ENCODE measurements at regions of chr1 and their contacts with region 1.

Region 1: DNA sequence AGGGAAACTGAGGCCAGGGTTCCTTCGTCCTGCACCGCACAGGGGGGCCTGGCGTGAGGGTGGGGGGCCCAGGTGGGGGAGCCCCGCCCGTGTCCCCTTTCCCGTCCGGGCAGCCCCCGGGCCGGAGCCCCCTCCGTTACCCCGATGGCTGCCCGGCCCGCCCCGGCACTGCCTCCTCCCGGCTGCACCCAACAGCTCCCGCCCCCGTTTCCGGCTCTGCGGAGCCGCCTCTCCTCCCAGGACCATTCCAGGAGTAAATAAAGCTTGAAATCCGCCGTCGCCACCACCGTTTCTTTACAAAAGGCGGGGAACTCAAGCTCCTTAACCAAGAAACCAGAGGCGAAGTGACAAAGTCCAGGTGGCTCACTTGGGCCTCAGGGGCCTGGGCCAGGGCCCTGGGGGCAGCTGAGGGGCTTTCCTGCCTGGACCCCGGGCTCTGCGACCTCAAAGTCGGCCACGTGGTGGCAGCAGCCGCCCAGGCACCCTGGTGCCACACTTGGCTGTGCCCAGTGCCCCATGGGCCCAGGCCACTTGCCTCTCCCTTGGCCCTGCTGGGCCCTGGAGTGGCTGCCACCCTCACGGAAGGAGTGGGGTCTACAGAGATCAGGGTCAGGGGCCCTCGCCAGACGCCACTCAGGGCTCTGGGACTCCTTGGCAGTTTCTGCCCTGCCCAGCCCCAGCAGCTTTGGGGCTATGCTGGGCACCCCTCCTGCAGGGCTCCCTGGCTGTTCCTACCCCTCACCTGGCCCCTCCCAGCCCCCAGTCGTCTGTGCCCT is 514 bp upstream of the FAAP20 start:
- DNase-seq: peak; percentile 93
- H3K4me3 ChIP-seq: peak overlapping the region; percentile 47 to 84 (median 64)
- H3K27ac ChIP-seq: peak overlapping the region; percentile 91 to 97 (median 94)
- H3K4me1 ChIP-seq: peaks cover 41 to 69% (median 52%) of the 10 kb centered on the region in 4 donors
- H3K27me3 ChIP-seq: no peaks in the 10 kb centered on the region
- CTCF ChIP-seq: peak; percentile 86 to 98 (median 93)
- EP300 ChIP-seq: no peak
- POLR2A ChIP-seq: peak; percentile 43

Region 2: DNA sequence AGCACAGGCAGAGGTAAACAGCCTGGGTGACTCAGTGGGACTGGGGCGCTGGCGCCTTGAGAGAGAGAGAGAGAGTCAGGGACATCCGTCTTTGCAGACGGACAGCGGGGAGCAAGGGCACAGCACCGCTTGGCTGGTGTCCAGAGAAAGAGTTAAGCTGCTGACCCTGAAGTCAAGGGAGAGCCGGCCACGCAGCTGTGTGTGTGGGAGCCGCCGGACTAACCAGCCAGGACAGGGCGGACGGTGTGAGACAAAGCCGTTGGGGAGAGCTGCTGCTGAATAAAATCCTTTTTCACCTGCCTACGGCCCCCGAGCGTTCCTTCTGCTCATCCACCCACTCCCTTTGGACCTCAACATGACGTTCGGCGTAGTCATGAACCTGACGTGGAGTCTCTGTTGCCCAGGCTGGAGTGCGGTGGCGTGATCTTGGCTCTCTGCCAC is 206.0 kb before region 1 on chr1:
- in situ Hi-C with region 1: no loop called
- intact Hi-C with region 1: no loop called
- DNase-seq: no peak
- H3K4me3 ChIP-seq: no peak overlapping the region
- H3K27ac ChIP-seq: peak overlapping the region in 2 of 4 donors; percentile 47 to 51
- H3K4me1 ChIP-seq: no peaks in the 10 kb centered on the region
- H3K27me3 ChIP-seq: peaks cover 30% of the 10 kb centered on the region
- CTCF ChIP-seq: no peak
- EP300 ChIP-seq: no peak
- POLR2A ChIP-seq: no peak

Region 3: GRCh38 chr1:2381741-2382620 is 186.9 kb after region 1 on chr1:
- in situ Hi-C with region 1: loop called (anchors 5 to 10 kb)
- intact Hi-C with region 1: loop called (anchors 2 kb)
- DNase-seq: peak; percentile 82
- H3K4me3 ChIP-seq: no peak overlapping the region
- H3K27ac ChIP-seq: no peak overlapping the region
- H3K4me1 ChIP-seq: peaks cover 0 to 10% (median 2%) of the 10 kb centered on the region in 4 donors
- H3K27me3 ChIP-seq: no peaks in the 10 kb centered on the region
- CTCF ChIP-seq: peak; percentile 83 to 96 (median 92)
- EP300 ChIP-seq: no peak
- POLR2A ChIP-seq: no peak

Region 4: DNA sequence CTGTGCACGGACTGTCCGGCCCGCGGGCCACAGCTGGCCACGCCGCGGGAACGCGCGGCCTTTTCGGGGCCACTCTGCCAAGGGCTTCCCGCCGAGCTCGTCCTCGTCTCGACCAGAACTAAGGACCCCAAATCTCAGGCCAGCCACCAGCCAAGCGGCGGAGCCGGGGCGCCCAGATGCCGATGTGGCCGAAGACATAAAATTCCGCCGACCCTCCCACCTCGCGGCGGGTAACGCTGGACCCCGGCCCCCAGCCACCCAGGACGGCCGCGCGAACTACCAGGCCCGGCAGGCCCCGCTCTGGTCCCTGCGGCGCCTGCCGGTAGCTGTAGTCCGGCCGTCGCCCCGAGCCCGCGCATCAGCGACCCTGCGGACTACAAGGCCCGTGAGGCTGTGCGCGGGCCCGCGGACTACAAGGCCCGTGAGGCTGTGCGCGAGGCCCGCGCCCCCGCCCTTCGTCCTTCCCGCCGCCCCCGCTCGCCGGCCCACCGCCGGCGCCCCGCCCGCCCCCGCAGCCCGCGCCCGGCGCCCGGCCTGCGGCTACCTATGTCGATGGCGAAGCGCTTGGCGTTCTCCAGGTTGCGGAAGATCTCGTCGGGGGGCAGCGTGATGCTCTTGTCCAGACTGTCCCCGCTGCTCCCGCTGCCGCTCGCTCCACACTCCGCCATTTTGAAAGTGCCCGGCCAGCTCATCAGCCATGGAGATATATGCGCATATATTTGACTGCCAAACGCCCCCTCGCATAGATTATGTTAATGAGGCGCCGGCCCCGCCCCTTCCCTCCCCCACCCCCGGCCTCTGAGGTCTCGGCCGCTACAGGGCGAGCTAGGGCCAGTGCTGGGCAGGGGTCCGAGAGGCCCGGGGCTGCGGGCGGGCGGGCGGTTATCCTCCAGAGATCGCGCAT is 331.1 kb after region 1 on chr1 and contains the start of gene PANK4:
- in situ Hi-C with region 1: loop called in 1 of 4 experiments (anchors 25 kb)
- intact Hi-C with region 1: no loop called
- DNase-seq: peak; percentile 92
- H3K4me3 ChIP-seq: peak within 1 kb of the TSS; percentile 64 to 94 (median 90)
- H3K27ac ChIP-seq: peak within 1 kb of the TSS; percentile 73 to 86 (median 78)
- H3K4me1 ChIP-seq: peaks cover 43 to 65% (median 55%) of the 10 kb centered on the region in 4 donors
- H3K27me3 ChIP-seq: peaks cover 15% of the 10 kb centered on the region
- CTCF ChIP-seq: peak in 2 of 5 experiments; percentile 11 to 41
- EP300 ChIP-seq: no peak
- POLR2A ChIP-seq: peak; percentile 57
- total RNA-seq, gene PANK4: 41.1 to 58.3 (median 47.3) TPM

Region 5: GRCh38 chr1:2786329-2787162 is 591.5 kb after region 1 on chr1:
- in situ Hi-C with region 1: loop called in 1 of 4 experiments (anchors 25 kb)
- intact Hi-C with region 1: no loop called
- DNase-seq: peak; percentile 57
- H3K4me3 ChIP-seq: no peak overlapping the region
- H3K27ac ChIP-seq: no peak overlapping the region
- H3K4me1 ChIP-seq: no peaks in the 10 kb centered on the region
- H3K27me3 ChIP-seq: peaks cover 55% of the 10 kb centered on the region
- CTCF ChIP-seq: peak; percentile 64 to 77 (median 72)
- EP300 ChIP-seq: no peak
- POLR2A ChIP-seq: no peak

Region 6: DNA sequence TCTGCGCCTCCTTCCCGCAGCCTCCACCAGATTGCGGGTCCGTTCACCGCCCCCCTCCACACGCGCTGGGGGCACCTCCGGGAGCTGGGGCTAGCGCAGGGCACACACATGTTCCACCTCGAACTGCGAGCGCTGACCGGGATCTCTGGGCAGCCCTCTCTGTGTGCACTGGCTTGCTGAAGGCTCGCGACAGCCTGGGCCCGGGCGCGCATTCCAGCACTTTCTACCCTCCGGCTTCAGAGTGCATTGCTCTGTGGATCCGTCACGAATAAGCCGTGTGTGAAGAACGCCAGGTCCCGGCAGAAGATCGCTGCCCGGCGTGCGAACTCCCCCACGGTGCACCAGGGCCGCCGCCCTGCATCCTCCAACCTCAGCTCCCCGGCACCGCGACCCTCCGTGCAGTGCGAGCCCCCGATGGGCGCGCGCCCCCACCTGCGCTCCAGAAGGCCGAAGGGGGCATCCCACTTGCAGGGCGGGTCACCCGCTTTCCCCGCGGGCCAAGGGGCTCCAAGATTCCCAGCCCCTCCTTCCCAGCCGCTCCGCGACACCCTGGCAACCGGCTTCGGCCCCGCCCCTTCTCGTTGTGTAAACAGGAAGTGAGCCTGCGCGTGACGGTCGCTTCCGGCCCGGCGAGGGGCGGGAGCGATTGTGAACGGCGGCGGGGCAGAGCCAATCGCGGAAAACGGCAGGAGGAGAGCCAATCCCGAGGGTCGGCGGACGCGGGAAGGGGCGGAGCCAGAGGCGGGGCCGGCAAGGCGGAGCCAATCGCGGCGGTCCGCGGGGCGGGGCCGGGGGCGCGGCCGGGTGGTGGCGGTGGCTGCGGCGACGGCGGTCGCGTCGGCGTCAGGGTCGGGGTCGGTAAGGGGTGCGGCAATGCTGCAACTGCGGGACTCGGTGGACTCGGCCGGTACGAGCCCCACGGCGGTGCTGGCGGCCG is 1429.4 kb after region 1 on chr1 and contains the start of gene TPRG1L:
- in situ Hi-C with region 1: no loop called
- intact Hi-C with region 1: loop called (anchors 10 kb)
- DNase-seq: peak; percentile 99
- H3K4me3 ChIP-seq: peak within 1 kb of the TSS; percentile 78 to 98 (median 94)
- H3K27ac ChIP-seq: peak within 1 kb of the TSS; percentile 82 to 94 (median 92)
- H3K4me1 ChIP-seq: peaks cover 15 to 27% (median 24%) of the 10 kb centered on the region in 4 donors
- H3K27me3 ChIP-seq: no peaks in the 10 kb centered on the region
- CTCF ChIP-seq: no peak
- EP300 ChIP-seq: peak; percentile 12
- POLR2A ChIP-seq: peak; percentile 47
- total RNA-seq, gene TPRG1L: 24.5 to 86.8 (median 56.0) TPM